Breast epithelium (tissue), 4 donors: ENCODE measurements at regions of chr12 and their contacts with region 1.

Region 1: DNA sequence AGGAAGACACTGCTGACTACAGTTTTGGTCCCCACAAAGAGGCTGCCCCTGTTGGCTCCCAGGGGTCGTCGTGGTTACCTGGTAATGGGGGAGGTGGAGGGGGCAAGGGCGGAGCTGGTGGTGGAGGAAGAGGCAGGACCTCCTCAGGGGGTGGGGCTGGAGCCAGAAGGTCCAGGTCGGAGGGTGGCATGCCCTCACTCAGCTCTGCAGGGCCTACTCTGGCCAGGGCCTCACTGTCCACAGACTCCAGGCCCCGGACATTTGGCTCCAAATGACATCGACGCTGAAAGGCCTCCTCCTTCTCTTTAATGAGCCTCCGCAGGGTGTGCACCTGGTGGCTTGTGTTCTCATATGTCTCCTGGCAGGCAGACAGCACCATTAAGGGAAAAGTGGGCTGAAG is 28.5 kb downstream of the PRPF40B start:
- DNase-seq: no peak
- H3K4me3 ChIP-seq: no peak overlapping the region
- H3K27ac ChIP-seq: no peak overlapping the region
- H3K4me1 ChIP-seq: no peaks in the 10 kb centered on the region
- H3K27me3 ChIP-seq: no peaks in the 10 kb centered on the region
- CTCF ChIP-seq: no peak
- POLR2A ChIP-seq: no peak

Region 2: GRCh38 chr12:48954841-48955501 is 696.9 kb before region 1 on chr12:
- intact Hi-C with region 1: loop called (anchors 5 kb)
- DNase-seq: no peak
- H3K4me3 ChIP-seq: no peak overlapping the region
- H3K27ac ChIP-seq: no peak overlapping the region
- H3K4me1 ChIP-seq: peaks cover 0 to 13% of the 10 kb centered on the region in 2 donors
- H3K27me3 ChIP-seq: no peaks in the 10 kb centered on the region
- CTCF ChIP-seq: no peak
- POLR2A ChIP-seq: no peak

Region 3: DNA sequence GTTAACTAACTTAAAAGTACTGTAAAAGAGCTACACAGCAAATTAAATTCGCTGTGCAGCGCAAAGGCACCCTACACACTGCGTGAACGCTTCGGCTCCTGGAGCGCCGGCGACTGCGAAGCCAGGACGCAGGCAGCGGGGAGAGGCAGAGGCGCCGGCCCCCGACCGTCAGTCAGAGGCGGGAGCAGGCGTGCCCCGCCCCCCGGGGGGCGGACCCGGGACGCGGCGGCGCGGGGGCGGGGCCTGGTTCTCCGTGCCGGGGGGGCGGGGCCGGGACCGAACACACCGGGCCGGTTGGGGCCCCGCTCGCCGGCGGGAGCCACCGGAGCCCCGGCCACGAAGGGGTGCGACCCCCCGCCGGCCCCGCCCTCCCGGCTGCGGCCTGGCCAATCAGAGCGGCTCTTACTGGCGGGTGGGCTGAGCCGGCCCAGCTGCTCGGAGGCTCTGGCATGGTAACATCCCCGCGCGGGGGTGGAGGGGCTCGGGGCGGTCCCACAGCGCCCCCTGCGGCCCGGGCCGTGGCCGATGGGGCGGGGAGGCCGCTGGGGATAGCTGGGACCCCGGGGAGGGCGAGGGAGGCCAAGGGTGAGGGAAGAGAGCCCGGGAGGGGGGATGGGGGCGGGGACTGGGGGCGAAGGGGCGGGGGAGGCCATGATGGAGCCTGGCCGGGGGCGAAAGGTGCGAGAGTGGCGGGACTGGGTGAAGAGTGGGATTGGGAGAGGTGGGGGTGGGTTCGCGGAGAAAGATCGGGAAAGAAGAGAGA is 28.5 kb before region 1 on chr12 and contains the start of gene PRPF40B:
- intact Hi-C with region 1: loop called (anchors 1 kb)
- DNase-seq: peak; percentile 82 to 85
- H3K4me3 ChIP-seq: peak within 1 kb of the TSS; percentile 51 to 77 (median 68)
- H3K27ac ChIP-seq: peak within 1 kb of the TSS; percentile 93 to 96
- H3K4me1 ChIP-seq: peaks cover 0 to 6% of the 10 kb centered on the region in 2 donors
- H3K27me3 ChIP-seq: no peaks in the 10 kb centered on the region
- CTCF ChIP-seq: no peak
- POLR2A ChIP-seq: peak; percentile 53
- total RNA-seq, gene PRPF40B: 10.4 to 34.0 (median 32.8) TPM

Region 4: DNA sequence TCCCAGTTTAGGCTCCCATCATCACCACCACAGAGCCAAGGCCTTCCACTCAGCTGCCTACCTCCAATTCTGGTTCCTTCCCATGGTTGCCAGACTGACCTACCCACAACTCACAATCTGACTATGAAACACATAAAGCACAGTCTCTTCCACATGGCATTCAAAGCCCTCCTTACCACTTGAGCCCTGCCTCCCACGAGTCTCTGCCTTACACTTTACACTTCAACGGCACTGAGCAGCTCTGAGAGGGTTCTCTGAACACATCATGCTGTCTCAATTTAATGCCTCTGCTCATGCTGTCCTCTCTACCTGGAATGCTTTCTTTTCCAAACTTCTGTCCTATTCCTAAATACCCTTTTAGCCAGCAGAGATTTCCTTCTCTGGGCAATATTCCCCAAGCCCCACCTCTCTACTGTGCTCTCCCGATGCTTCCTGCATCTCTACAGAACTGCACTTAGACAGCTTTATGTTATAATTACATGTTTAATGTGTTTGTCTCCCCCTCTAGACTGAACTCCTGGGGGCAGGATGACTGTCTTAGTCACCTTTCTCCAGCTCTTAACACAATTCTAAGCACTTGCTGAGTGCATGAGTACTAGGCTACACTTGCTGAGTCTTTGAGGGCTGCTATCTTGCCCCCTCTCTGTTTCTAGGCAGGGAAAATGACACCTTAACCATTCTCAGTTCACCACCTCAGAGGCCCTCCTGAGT is 31.9 kb after region 1 on chr12:
- intact Hi-C with region 1: loop called (anchors 2 kb)
- DNase-seq: no peak
- H3K4me3 ChIP-seq: no peak overlapping the region
- H3K27ac ChIP-seq: no peak overlapping the region
- H3K4me1 ChIP-seq: no peaks in the 10 kb centered on the region
- H3K27me3 ChIP-seq: no peaks in the 10 kb centered on the region
- CTCF ChIP-seq: no peak
- POLR2A ChIP-seq: no peak

Region 5: DNA sequence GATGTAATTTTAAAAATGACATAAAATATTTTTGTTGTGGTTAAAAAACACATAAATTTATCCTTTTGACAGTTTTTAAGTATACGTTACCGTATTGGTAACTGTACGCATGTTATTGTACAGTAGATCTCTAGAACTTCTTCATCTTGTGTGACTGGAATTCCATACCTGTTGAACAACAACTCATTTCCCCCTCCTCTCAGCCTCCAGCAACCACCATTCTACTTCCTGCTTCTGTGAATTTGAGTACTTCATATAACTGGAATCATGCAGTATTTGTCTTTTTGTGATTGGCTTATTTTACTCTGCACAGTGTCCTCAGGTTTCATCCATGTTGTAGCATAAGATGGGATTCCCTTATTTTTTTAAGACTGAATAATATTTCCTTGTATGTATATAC is 998.4 kb after region 1 on chr12:
- intact Hi-C with region 1: no loop called
- DNase-seq: no peak
- H3K4me3 ChIP-seq: no peak overlapping the region
- H3K27ac ChIP-seq: no peak overlapping the region
- H3K4me1 ChIP-seq: no peaks in the 10 kb centered on the region
- H3K27me3 ChIP-seq: no peaks in the 10 kb centered on the region
- CTCF ChIP-seq: no peak
- POLR2A ChIP-seq: no peak